Endothelial cell of umbilical vein (primary cell): ENCODE measurements at regions of chr2 and their contacts with region 1.

Region 1: GRCh38 chr2:146661473-146662096 is 1183.2 kb upstream of the ACVR2A start:
- DNase-seq: peak; percentile 56
- H3K4me3 ChIP-seq: no peak overlapping the region
- H3K27ac ChIP-seq: no peak overlapping the region
- H3K4me1 ChIP-seq: peaks cover 6% of the 10 kb centered on the region
- H3K27me3 ChIP-seq: no peaks in the 10 kb centered on the region
- CTCF ChIP-seq: peak; percentile 26 to 50
- POLR2A ChIP-seq: no peak

Region 2: DNA sequence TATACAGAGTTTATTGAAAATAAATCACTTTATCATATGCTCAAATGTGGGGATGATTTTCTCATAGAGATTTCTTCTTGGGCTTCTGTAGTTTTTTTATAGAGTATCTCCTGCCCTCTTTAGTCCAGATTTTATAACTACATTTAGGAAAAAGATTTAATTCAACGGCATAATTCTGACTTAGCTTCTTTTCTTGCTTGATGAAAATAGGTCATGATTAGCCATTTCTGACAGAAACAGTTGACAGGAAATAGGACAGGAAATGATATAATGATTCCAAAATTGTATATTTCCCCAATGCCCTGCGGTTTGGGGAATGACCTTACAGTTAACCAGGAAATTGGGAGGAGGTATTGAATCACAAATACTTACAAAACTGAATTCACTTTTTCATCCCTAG is 348.7 kb before region 1 on chr2:
- CTCF ChIA-PET with region 1: no interaction called
- POLR2A ChIA-PET with region 1: no interaction called
- dilution Hi-C with region 1: no loop called
- intact Hi-C with region 1: loop called (anchors 2 kb)
- DNase-seq: peak; percentile 65
- H3K4me3 ChIP-seq: no peak overlapping the region
- H3K27ac ChIP-seq: peak overlapping the region; percentile 40
- H3K4me1 ChIP-seq: peaks cover 14% of the 10 kb centered on the region
- H3K27me3 ChIP-seq: no peaks in the 10 kb centered on the region
- CTCF ChIP-seq: no peak
- POLR2A ChIP-seq: no peak